ENCODE measurements at regions of chr15 and their contacts with region 1.

Region 1: GRCh38 chr15:41660235-41661077 is at the start of gene MGA:
- DNase-seq: peak; percentile 92
- H3K4me3 Mint-ChIP-seq: peak within 1 kb of the TSS; percentile 86
- H3K27ac Mint-ChIP-seq: peak within 1 kb of the TSS; percentile 76
- H3K4me1 Mint-ChIP-seq: peaks cover 39% of the 10 kb centered on the region
- H3K27me3 Mint-ChIP-seq: no peaks in the 10 kb centered on the region
- total RNA-seq, gene MGA: 29.6 to 31.4 TPM

Region 2: GRCh38 chr15:41621200-41622193 is 39.0 kb before region 1 on chr15:
- CTCF ChIA-PET with region 1: interaction called, 4 read pairs
- POLR2A ChIA-PET with region 1: interaction called, 6 read pairs
- intact Hi-C with region 1: loop called (anchors 1 kb)
- DNase-seq: peak; percentile 90
- H3K4me3 Mint-ChIP-seq: peak overlapping the region; percentile 76
- H3K27ac Mint-ChIP-seq: peak overlapping the region; percentile 69
- H3K4me1 Mint-ChIP-seq: peaks cover 16% of the 10 kb centered on the region
- H3K27me3 Mint-ChIP-seq: no peaks in the 10 kb centered on the region

Region 3: DNA sequence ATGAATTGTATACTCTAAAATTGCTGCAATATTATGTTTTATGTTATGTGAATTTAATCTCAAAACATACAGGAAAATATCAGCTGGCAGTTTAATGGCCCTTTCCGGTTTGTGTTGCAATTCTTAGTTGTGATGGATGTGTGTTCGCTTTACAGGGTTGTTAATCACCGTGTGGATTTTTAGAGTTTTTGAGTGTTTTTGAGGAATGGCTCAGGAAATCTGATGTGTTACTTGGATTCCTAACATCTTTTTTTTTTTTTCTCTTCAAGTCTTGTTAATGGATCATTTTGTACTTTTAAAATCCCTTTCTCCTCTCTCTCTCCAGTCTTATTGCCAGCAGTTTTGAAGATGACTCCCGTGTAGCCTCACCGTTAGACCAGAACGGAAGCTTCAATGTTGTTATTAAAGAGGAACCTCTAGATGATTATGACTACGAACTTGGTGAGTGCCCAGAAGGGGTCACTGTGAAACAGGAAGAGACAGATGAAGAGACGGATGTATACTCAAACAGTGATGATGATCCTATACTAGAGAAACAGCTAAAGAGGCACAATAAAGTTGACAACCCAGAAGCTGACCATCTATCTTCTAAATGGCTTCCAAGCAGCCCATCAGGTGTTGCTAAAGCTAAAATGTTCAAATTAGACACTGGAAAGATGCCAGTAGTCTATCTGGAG is 35.4 kb after region 1 on chr15:
- CTCF ChIA-PET with region 1: no interaction called
- POLR2A ChIA-PET with region 1: interaction called, 3 read pairs
- intact Hi-C with region 1: loop called (anchors 2 kb)
- DNase-seq: peak; percentile 66
- H3K4me3 Mint-ChIP-seq: peak overlapping the region; percentile 10
- H3K27ac Mint-ChIP-seq: peak overlapping the region; percentile 70
- H3K4me1 Mint-ChIP-seq: peaks cover 47% of the 10 kb centered on the region
- H3K27me3 Mint-ChIP-seq: no peaks in the 10 kb centered on the region

Region 4: DNA sequence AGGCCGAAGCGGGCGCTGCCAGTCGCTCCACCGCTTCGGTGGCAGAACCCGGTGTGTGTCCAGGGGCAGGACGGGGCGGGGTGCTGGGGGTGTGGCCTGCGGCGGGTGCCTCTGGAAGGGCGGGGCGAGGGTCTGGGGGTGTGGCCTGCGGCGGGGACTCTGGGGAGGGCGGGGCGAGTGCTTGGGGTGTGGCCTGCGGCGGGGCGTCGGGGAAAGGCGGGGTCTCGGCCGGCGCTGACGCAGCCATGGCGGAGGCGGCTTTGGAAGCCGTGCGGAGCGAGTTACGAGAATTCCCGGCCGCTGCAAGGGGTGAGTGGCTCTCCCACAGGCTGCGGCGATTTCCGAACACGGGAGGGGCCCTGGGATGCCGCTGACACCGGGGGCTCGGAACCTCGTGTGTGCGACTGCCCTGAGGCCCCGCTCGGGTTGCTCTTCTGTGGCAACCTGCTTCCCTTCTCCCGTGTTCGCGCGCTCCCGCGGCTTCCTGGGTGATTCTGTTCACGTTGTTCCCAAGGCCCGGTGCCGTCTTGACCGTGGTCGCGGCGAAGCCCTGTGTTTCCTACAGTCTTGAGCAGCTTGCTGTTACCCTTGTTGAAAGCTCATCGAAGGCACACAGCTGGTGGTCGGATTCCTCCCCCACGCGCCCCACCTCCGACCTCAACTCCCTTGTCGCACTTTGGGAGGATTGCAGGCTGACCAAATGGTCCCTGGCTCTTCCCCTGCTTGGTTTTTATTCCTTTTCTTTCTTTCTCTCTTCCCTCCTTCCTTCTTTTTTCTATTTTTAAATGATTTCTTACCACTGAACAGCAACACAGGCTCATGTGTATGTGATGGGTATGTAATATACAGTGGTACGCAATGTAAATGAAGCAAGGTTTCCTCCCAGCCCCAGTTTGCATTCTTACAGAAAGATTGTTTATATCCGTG is 167.7 kb after region 1 on chr15 and contains the start of gene JMJD7:
- CTCF ChIA-PET with region 1: no interaction called
- POLR2A ChIA-PET with region 1: no interaction called
- intact Hi-C with region 1: no loop called
- DNase-seq: peak; percentile 96
- H3K4me3 Mint-ChIP-seq: peak within 1 kb of the TSS; percentile 80
- H3K27ac Mint-ChIP-seq: peak within 1 kb of the TSS; percentile 52
- H3K4me1 Mint-ChIP-seq: peaks cover 40% of the 10 kb centered on the region
- H3K27me3 Mint-ChIP-seq: no peaks in the 10 kb centered on the region
- total RNA-seq, gene JMJD7: 17.9 to 24.8 TPM

Measured in activated CD4-positive, alpha-beta memory T cell treated with anti-CD3 and anti-CD28 coated beads for 36 hours (primary cell).